Mucosa of descending colon (tissue), 3 donors: ENCODE measurements at regions of chr3 and their contacts with region 1.

Region 1: DNA sequence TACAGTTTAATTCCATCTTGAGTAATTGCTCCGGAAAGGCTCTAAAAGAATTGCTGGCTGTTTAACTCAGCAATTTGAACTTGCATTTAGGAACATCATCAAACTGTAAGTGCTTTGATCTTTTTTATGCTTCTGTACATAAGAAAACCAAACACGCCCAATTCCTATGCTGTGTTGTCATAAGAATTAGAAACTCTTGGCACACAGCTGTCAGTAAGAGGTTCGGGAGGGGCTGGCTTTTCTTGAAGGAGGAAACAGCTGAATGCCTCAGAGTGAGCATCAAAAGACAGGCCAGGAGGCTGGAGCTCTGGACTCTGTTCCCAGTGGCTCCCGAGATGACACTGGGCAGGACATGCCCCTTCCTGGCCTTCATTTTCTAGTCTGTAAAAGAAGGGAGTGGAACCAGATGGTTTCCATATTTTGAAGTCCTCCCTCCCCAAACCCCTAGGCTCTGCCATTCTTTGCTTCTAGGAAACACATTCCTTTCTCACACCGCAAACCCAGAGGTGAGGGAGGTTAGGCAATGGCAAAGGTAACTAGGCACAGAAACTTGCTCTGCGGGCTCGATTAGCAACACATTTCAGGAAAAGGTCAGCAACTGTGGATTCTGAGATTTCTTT is 73.7 kb upstream of the DLG1 start:
- DNase-seq: peak in 1 of 3 donors; percentile 62
- ATAC-seq: peak; percentile 93
- H3K4me3 ChIP-seq: no peak overlapping the region
- H3K4me1 ChIP-seq: peaks cover 10% of the 10 kb centered on the region
- CTCF ChIP-seq: no peak

Region 2: GRCh38 chr3:197298341-197298857 is 73.8 kb before region 1 on chr3 and contains the start of gene DLG1:
- intact Hi-C with region 1: loop called in 1 of 2 experiments (anchors 5 kb)
- DNase-seq: peak; percentile 95 to 97 (median 95)
- ATAC-seq: peak; percentile 87
- H3K4me3 ChIP-seq: peak within 1 kb of the TSS; percentile 87
- H3K4me1 ChIP-seq: peaks cover 21% of the 10 kb centered on the region
- CTCF ChIP-seq: no peak
- total RNA-seq, gene DLG1: 107 to 163 (median 134) TPM